Adrenal gland (tissue), 19 donors: ENCODE measurements at regions of chr6 and their contacts with region 1.

Region 1: GRCh38 chr6:17851001-17851719 is 136.3 kb downstream of the KIF13A start:
- DNase-seq: no peak
- H3K4me3 ChIP-seq: no peak overlapping the region
- H3K27ac ChIP-seq: no peak overlapping the region
- H3K4me1 ChIP-seq: no peaks in the 10 kb centered on the region
- H3K27me3 ChIP-seq: no peaks in the 10 kb centered on the region
- CTCF ChIP-seq: no peak
- POLR2A ChIP-seq: no peak

Region 2: DNA sequence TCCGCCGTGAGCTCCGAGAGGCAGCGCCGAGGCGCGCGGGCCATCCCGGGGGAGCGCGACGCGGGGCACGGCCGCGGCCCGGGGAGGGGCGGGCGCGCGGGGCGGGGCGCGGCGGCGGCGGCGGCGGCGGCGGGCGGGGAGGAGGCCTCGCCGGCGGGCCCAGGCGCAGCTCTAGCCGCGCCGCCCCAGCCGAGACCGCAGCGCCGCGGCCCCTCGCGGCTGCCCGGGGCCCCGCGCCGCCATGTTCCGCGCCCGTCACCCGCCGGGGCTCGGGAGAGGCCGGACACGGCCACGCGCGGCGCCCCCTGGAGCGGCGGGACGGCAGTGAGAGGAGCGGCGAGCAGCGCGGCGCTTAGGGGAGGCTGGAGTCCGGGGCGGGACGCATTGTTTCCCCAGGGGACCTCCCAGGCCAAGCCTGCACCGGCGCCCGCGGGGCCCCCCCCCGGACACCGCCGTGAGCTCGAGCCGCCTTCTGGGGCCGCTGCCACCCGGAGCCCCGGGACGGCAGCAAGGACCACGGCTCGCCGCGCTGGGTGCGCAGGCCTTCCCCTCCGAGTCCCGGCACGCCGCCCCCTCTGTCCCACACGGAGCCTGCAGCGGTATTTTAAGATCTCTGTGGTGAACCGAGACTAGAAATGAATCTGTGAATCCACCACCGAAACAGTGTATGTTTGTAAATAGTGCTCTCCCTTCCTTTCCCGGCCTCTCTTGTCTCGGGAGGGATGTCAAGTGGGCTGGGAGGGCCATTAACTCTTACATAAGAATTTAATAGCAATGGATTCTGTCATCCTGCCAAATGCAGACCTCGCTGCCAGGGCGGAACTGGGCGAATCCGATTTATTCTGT is 136.6 kb after region 1 on chr6 and contains the start of gene KIF13A:
- intact Hi-C with region 1: loop called in 1 of 2 experiments (anchors 10 kb)
- DNase-seq: peak; percentile 71 to 88 (median 73)
- H3K4me3 ChIP-seq: peak within 1 kb of the TSS; percentile 27 to 87 (median 62)
- H3K27ac ChIP-seq: peak within 1 kb of the TSS; percentile 77 to 99 (median 97)
- H3K4me1 ChIP-seq: peaks cover 24 to 39% of the 10 kb centered on the region in 2 donors
- H3K27me3 ChIP-seq: no peaks in the 10 kb centered on the region
- CTCF ChIP-seq: peak in 4 of 6 experiments; percentile 27 to 46 (median 35)
- POLR2A ChIP-seq: peak; percentile 39 to 70
- total RNA-seq, gene KIF13A: 22.0 to 91.6 (median 53.5) TPM